Naive thymus-derived CD4-positive, alpha-beta T cell (primary cell): ENCODE measurements at regions of chr3 and their contacts with region 1.

Region 1: DNA sequence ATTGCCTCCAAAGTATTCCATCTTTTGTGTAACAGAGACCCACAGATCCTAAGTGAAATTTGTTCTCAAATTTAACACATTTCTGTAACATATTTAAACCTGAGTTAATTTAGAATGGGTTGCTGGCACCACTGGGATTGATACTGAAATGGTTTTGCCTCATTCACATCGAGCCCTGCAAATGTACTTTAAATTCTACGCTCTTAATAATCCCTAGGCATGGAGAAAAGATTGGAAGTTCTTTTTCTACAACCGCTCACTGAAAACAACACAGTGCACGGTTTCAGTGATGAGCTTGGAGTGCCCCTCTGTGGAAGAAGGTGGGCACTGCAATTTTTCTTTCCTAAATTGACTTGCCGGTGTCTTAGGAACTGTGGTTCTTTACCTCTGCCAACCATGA is 109.9 kb upstream of the ATP11B start:
- DNase-seq: peak in 8 of 9 donors; percentile 14 to 61 (median 52)
- ATAC-seq: peak; percentile 83
- H3K4me3 ChIP-seq: no peak overlapping the region
- H3K4me3 Mint-ChIP-seq: peak overlapping the region; percentile 68 to 84 (median 74)
- H3K27ac ChIP-seq: no peak overlapping the region
- H3K27ac Mint-ChIP-seq: peak overlapping the region in 2 of 9 donors; percentile 1 to 3
- H3K4me1 ChIP-seq: peaks cover 0 to 6% of the 10 kb centered on the region in 2 donors
- H3K4me1 Mint-ChIP-seq: peaks cover 6 to 15% (median 10%) of the 10 kb centered on the region in 7 donors
- H3K27me3 ChIP-seq: peaks cover 0 to 6% of the 10 kb centered on the region in 2 donors
- H3K27me3 Mint-ChIP-seq: peaks cover 40 to 59% (median 51%) of the 10 kb centered on the region in 5 donors

Region 2: DNA sequence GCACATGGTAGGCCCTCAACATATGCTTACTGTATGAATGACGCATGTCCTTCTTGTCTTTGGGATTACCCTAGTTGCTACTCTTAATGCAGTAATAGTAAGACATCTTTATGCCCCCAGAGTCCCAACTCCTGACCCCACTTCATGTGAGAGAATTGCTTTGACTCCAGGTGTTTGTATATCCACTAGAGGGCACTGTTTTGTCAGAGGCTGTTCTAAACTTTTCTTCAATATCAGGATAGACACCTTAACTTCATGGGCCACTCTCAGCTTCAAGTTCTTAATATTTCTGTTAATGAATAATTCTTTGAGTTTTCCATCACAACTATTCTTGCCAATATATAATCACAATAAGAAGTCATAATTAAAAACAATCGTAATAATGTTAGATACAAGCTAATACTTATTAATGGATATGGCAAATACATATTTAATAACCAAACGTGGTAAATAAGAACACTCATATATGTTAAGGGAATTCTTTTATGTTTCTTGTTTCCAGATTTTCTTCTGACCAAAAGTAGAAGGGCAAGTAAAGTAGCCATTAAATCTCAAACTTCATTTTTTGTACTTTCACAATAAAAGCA is 1356.7 kb before region 1 on chr3:
- CTCF ChIA-PET with region 1: interaction called, 4 read pairs
- POLR2A ChIA-PET with region 1: no interaction called
- intact Hi-C with region 1: loop called in 1 of 2 experiments (anchors 1 kb)
- DNase-seq: peak in 2 of 9 donors; percentile 11 to 22
- ATAC-seq: no peak
- H3K4me3 ChIP-seq: no peak overlapping the region
- H3K4me3 Mint-ChIP-seq: no peak overlapping the region
- H3K27ac ChIP-seq: no peak overlapping the region
- H3K27ac Mint-ChIP-seq: no peak overlapping the region
- H3K4me1 ChIP-seq: no peaks in the 10 kb centered on the region
- H3K4me1 Mint-ChIP-seq: no peaks in the 10 kb centered on the region
- H3K27me3 ChIP-seq: no peaks in the 10 kb centered on the region
- H3K27me3 Mint-ChIP-seq: peaks cover 0 to 10% (median 4%) of the 10 kb centered on the region in 5 donors

Region 3: DNA sequence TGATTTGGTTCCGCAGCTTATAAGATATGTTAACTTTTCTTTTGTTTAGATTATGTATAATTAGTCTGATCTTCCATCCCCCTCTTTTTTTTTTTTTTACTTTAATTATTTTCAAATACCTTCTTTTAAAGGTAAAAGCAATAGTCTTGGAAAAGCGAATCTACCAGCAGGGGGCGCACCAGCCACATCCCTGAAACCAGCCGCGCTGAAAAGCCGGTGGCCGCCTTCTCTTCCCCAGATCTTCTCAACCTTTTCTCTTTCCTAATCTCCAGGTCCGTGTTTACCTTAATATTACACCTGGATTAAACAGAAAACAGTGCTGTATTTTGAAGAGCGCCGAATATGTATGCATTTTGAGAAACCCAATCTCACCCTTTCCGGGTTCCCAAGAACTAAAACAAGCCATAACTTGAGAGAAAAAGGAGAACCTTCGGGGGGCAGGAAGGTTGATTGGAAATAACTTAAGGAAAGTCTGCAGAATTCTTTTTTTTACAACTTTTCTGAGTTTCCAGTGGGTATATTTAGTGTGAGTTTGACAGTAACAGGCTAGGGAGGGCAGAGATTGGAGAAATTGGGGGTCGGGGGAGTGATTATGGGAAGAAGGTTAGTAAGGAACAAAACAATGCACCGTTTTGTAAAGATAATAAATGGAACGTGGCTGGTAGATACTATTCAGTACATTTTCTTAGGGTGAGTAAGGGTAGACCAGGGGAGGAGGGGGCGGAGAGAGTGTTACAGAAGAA is 973.7 kb before region 1 on chr3:
- CTCF ChIA-PET with region 1: no interaction called
- POLR2A ChIA-PET with region 1: no interaction called
- intact Hi-C with region 1: loop called in 1 of 2 experiments (anchors 1 kb)
- DNase-seq: peak in 3 of 9 donors; percentile 26 to 67 (median 35)
- ATAC-seq: no peak
- H3K4me3 ChIP-seq: no peak overlapping the region
- H3K4me3 Mint-ChIP-seq: peak overlapping the region in 8 of 10 donors; percentile 18 to 72 (median 48)
- H3K27ac ChIP-seq: no peak overlapping the region
- H3K27ac Mint-ChIP-seq: peak overlapping the region in 1 of 9 donors; percentile 86
- H3K4me1 ChIP-seq: peaks cover 0 to 6% of the 10 kb centered on the region in 2 donors
- H3K4me1 Mint-ChIP-seq: peaks cover 5 to 12% (median 8%) of the 10 kb centered on the region in 7 donors
- H3K27me3 ChIP-seq: peaks cover 12 to 46% of the 10 kb centered on the region in 2 donors
- H3K27me3 Mint-ChIP-seq: peaks cover 56 to 70% (median 66%) of the 10 kb centered on the region in 5 donors

Region 4: DNA sequence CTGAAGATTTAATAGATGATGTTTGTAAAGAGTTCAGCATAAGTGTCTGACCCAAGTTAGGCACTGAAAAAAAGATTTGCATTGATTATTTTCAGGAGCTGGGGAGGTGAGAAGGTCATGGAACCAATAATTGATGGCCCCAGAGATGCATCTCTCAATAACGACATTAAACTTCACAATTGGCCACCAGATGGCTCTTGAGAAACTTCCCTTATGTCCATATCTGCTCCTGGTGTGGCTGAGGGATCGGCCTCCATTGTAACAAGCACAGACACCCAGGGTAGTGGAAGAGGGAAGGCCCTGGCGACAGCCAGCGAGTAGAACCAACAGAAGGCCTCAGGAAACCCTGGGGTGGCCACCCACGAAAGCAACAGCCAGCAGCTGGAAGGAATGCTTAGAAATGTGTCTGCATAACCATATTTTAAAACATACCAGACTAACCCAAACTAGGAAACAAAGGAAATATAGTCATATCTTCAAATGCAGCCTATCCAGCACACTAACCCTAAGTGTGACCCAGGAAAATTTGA is 435.0 kb before region 1 on chr3:
- CTCF ChIA-PET with region 1: no interaction called
- POLR2A ChIA-PET with region 1: no interaction called
- intact Hi-C with region 1: loop called (anchors 1 to 5 kb)
- DNase-seq: no peak
- ATAC-seq: no peak
- H3K4me3 ChIP-seq: no peak overlapping the region
- H3K4me3 Mint-ChIP-seq: no peak overlapping the region
- H3K27ac ChIP-seq: no peak overlapping the region
- H3K27ac Mint-ChIP-seq: no peak overlapping the region
- H3K4me1 ChIP-seq: no peaks in the 10 kb centered on the region
- H3K4me1 Mint-ChIP-seq: peaks cover 0 to 2% (median 0%) of the 10 kb centered on the region in 7 donors
- H3K27me3 ChIP-seq: no peaks in the 10 kb centered on the region
- H3K27me3 Mint-ChIP-seq: peaks cover 0 to 5% (median 0%) of the 10 kb centered on the region in 5 donors